Heart left ventricle (tissue), 16 donors: ENCODE measurements at regions of chr3 and their contacts with region 1.

Region 1: DNA sequence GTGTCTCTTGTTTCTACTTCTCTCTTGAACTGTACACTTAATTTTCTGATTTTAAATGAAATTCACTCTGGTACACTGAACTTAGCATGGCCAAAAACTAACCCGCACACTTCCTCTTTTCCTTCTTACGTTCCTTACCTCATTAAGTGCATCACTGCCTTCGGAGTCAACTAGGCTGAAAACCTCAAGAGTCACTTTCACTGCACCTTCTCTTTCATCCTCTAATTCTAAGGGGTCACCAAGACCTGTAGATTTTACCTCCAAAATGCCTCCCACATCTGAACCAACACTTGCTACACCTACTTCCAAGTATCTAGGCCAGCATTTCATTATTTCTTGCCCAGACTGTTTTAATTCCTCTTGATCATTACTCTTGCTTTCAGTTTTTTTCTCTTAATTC is 6.6 kb downstream of the CBLB start:
- DNase-seq: no peak
- ATAC-seq: no peak
- H3K4me3 ChIP-seq: peak overlapping the region in 2 of 12 donors; percentile 4 to 7
- H3K27ac ChIP-seq: peak overlapping the region in 1 of 12 donors; percentile 23
- H3K4me1 ChIP-seq: peaks cover 0 to 94% (median 75%) of the 10 kb centered on the region in 12 donors
- H3K27me3 ChIP-seq: no peaks in the 10 kb centered on the region
- CTCF ChIP-seq: no peak
- POLR2A ChIP-seq: no peak

Region 2: GRCh38 chr3:105480768-105481167 is 381.4 kb before region 1 on chr3:
- intact Hi-C with region 1: no loop called
- DNase-seq: no peak
- ATAC-seq: no peak
- H3K4me3 ChIP-seq: no peak overlapping the region
- H3K27ac ChIP-seq: no peak overlapping the region
- H3K4me1 ChIP-seq: no peaks in the 10 kb centered on the region
- H3K27me3 ChIP-seq: no peaks in the 10 kb centered on the region
- CTCF ChIP-seq: no peak
- POLR2A ChIP-seq: no peak

Region 3: GRCh38 chr3:105707009-105707408 is 155.2 kb before region 1 on chr3:
- intact Hi-C with region 1: loop called in 2 of 10 experiments (anchors 2 to 10 kb)
- DNase-seq: no peak
- ATAC-seq: peak in 2 of 4 donors; percentile 69
- H3K4me3 ChIP-seq: no peak overlapping the region
- H3K27ac ChIP-seq: peak overlapping the region in 1 of 12 donors; percentile 29
- H3K4me1 ChIP-seq: peaks cover 0 to 12% (median 6%) of the 10 kb centered on the region in 12 donors
- H3K27me3 ChIP-seq: no peaks in the 10 kb centered on the region
- CTCF ChIP-seq: no peak
- POLR2A ChIP-seq: no peak

Region 4: GRCh38 chr3:105827959-105828358 is 34.3 kb before region 1 on chr3:
- intact Hi-C with region 1: loop called in 3 of 10 experiments (anchors 5 kb)
- DNase-seq: peak in 2 of 5 donors; percentile 33 to 35
- ATAC-seq: peak; percentile 12 to 76 (median 72)
- H3K4me3 ChIP-seq: no peak overlapping the region
- H3K27ac ChIP-seq: peak overlapping the region in 9 of 12 donors; percentile 20 to 75 (median 43)
- H3K4me1 ChIP-seq: peaks cover 8 to 92% (median 57%) of the 10 kb centered on the region in 12 donors
- H3K27me3 ChIP-seq: no peaks in the 10 kb centered on the region
- CTCF ChIP-seq: peak in 4 of 12 donors; percentile 8 to 38 (median 26)
- POLR2A ChIP-seq: no peak